AG04449 (cell line): ENCODE measurements at regions of chr17 and their contacts with region 1.

Region 1: DNA sequence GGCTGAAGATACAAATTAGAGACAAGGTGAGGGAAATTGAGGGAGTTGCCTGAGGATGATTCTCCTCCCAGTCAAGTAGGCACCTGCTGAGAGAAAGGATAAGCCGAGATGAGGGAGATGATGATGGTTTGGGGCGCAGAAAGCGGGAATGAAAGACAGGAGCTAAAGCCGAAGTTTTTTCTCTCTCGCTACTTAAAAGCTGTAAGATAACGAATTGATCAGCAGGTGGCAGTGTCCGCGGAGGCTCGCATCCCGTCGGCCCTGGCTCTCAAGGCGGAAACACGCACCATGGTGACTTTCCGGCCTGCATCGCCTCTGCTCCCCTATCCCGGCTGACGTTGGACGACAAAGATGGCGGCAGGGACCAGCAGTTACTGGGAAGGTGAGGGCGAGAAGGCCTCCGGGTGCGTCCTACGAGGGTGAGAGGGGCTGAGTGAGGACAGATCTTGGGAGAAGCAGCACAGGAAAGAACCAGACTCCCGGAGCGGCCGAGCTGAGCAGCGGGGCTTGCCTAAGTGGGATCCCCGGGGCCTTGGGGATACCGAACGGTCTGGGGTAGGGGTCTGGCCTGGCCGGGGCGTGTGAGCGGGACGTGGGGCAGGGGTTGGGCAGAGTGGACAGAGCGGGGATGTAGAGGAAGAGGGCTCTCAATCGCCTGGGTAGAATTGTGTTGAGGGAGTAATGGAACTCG is at the start of gene GOSR1:
- DNase-seq: peak; percentile 74
- H3K4me3 ChIP-seq: peak within 1 kb of the TSS; percentile 71
- CTCF ChIP-seq: peak; percentile 82

Region 2: GRCh38 chr17:30336369-30337171 is 140.7 kb before region 1 on chr17:
- CTCF ChIA-PET with region 1: interaction called, 29 read pairs
- POLR2A ChIA-PET with region 1: interaction called, 3 read pairs
- DNase-seq: no peak
- H3K4me3 ChIP-seq: no peak overlapping the region
- CTCF ChIP-seq: peak; percentile 7

Region 3: DNA sequence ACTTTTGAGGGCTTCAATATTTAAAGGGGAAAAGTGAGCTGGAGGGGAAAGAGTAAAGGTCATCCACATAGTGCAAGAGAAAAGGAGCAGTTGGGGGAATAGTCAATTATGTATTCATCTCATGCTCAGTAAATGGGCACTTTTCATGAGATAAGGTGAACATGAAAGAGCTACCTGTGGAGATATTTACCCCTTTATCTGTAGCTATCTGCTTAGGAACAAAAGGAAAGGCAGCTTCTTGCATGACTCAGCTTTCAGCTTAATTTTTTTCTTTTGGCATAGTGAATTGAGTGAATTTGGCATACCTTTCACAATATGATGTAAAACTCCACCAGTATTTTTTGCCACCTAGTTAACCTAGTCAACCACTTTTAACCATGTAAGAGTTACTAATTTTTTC is 72.1 kb before region 1 on chr17:
- CTCF ChIA-PET with region 1: no interaction called
- POLR2A ChIA-PET with region 1: no interaction called
- DNase-seq: no peak
- H3K4me3 ChIP-seq: no peak overlapping the region
- CTCF ChIP-seq: no peak

Region 4: GRCh38 chr17:30495586-30495985 is 18.4 kb after region 1 on chr17:
- CTCF ChIA-PET with region 1: interaction called, 30 read pairs
- POLR2A ChIA-PET with region 1: no interaction called
- DNase-seq: no peak
- H3K4me3 ChIP-seq: no peak overlapping the region
- CTCF ChIP-seq: no peak

Region 5: DNA sequence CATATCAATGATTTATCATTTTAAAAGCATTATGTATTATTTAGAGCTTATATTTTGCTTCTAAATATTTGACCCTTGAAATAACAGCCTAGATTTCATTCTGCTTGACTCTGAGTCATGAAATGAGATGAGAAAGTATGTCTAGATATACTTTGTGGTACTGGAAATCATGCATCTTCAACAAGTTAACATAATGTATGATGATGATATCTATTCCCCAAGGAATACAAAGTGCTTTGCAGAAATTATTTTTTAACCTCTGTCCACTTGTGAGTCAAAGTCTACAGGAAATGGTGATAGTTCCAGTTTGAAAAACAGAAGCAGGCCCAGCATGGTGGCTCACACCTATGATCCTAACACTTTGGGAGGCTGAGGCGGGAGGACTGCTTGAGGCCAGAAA is 36.1 kb after region 1 on chr17:
- CTCF ChIA-PET with region 1: interaction called, 12 read pairs
- POLR2A ChIA-PET with region 1: no interaction called
- DNase-seq: peak; percentile 64
- H3K4me3 ChIP-seq: no peak overlapping the region
- CTCF ChIP-seq: no peak

Region 6: GRCh38 chr17:30716461-30717300 is 239.5 kb after region 1 on chr17:
- CTCF ChIA-PET with region 1: interaction called, 12 read pairs
- POLR2A ChIA-PET with region 1: no interaction called
- DNase-seq: no peak
- H3K4me3 ChIP-seq: no peak overlapping the region
- CTCF ChIP-seq: peak; percentile 5